Right ventricle myocardium superior (tissue), 1 donor: ENCODE measurements at regions of chr1 and their contacts with region 1.

Region 1: DNA sequence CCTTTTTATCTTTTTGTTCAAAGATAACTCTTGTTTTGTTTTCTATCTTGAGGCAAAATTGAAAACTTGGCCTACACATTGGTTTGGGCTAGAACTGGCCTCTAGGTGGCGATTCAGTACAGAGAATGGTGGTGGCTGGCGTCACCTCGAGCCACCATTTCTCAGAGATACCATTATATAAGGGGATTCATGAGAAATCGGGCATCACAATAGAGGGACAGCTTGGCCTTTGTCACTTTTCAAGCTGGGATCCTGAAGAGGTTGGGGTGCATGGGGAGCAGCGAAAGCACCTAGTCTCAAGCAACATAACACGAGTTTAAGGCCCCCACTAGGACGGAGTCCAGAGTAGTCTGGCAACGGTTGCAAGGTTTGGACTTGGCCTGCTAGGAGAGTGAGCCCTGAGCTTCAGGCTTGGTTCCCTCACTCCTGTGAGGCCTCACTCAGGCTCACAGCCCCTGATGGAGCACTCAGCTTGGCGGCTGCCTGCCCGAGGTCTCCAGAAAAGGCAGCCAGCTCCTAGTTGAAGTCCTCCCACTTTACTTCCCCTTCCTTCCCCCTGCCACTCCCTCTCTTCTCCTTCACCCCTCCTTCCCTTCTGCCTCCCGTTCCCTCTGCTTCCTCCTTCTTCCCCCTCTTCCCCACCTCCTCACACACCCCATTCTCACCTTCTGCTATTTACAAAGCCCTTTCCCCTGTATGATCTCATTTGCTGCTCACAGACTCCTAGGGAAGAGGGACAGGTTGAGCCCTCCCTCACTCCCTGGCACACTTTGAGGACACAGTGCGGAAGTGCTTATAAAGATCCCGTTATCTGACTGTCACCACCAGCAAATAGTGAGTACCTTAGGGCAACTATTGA is 67.8 kb downstream of the LRIG2 start:
- DNase-seq: peak; percentile 68
- ATAC-seq: peak; percentile 95

Region 2: GRCh38 chr1:113255720-113256347 is 115.0 kb after region 1 on chr1:
- intact Hi-C with region 1: no loop called
- DNase-seq: no peak
- ATAC-seq: no peak

Region 3: GRCh38 chr1:113452921-113453770 is 312.3 kb after region 1 on chr1:
- intact Hi-C with region 1: loop called (anchors 5 kb)
- DNase-seq: no peak
- ATAC-seq: peak; percentile 78

Region 4: DNA sequence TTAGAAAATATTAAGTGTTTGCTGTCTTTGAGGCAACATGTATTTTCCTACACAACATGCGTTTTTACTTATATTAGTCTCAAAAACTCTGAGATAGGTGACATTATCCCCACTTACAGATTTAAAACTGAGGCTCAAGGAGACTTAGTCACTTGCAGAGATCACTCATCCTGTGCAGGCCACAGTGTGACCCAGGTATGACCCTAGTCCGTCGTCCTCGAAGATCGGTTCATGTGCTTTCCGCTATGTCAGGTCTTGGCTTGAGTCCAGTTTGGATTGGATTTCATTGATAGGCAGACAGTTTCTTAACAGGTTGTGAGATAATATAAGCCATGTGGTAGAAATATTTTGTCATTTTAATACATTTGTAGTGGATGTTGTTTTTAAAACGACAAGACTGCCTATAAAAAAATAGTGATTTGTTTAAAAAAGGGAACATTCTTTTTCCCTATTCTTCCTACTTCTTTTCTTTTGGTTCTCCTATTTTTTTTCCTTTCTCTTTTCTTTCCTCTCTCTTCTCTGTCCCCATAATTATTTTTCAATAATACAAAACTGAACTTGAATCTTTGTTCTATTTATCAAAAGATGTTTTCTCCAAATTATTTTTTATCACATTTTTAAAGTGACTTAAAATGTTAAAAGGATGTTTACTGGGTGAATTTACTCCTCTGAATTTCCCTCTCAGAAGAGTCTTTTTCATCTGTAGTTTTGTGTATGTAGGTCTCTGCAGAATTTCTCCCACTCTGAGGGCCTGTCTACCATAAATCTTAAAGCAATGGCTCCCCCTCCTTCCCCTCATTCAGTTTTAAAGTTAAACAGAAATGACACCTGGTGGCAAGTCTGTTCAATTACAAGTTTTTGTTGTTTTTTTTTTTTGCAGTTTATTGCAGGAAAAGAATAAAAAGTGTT is 536.7 kb after region 1 on chr1:
- intact Hi-C with region 1: loop called (anchors 2 kb)
- DNase-seq: no peak
- ATAC-seq: peak; percentile 76